Activated CD4-positive, alpha-beta T cell treated with anti-CD3 and anti-CD28 coated beads, Interleukin-2, amount 10 ng/mL, durations not matched to agents 24 days and 14 days (primary cell): ENCODE measurements at regions of chr5 and their contacts with region 1.

Region 1: DNA sequence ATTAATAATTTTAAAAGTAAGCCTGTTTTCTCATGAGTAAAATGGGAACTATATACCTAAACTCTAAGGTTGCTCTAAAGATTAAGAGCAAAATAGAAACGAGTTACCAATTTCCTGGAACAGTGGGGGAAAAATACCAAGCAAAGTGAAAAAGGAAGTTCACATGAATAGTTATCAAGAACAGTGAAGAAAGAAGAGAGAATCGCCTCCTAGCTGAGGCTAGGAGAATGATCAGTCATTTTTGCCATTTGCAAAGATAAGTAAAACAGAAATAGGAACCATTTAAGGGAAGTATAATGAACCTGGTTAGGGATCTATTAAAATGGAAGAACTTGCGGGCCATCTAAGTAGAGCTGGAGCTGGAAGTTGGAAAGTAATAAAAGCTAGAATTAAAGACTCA is 50.7 kb downstream of the P4HA2 start:
- DNase-seq: no peak
- H3K4me3 Mint-ChIP-seq: peak overlapping the region; percentile 71
- H3K27ac Mint-ChIP-seq: peak overlapping the region; percentile 80
- H3K4me1 Mint-ChIP-seq: peaks cover 33% of the 10 kb centered on the region
- H3K27me3 Mint-ChIP-seq: peaks cover 8% of the 10 kb centered on the region

Region 2: DNA sequence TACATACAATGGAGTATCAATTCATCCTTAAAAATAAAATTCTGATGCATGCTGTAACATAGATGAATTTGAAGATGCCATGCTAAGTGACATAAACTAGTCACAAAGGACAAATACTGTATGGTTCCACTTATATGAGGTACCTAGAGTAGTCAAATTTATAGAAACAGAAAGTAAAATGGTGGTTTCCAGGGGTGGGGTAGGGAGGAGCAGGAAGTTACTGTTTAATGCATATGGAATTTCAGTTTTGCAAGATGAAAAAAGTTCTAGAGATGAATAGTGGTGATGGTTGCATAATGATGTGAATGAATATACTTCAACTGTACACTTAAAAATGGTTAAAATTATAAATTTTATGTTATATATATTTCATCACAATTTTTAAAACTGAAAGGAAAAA is 322.9 kb before region 1 on chr5:
- intact Hi-C with region 1: no loop called
- DNase-seq: peak; percentile 74
- H3K4me3 Mint-ChIP-seq: peak overlapping the region; percentile 43
- H3K27ac Mint-ChIP-seq: peak overlapping the region; percentile 46
- H3K4me1 Mint-ChIP-seq: peaks cover 19% of the 10 kb centered on the region
- H3K27me3 Mint-ChIP-seq: peaks cover 12% of the 10 kb centered on the region

Region 3: DNA sequence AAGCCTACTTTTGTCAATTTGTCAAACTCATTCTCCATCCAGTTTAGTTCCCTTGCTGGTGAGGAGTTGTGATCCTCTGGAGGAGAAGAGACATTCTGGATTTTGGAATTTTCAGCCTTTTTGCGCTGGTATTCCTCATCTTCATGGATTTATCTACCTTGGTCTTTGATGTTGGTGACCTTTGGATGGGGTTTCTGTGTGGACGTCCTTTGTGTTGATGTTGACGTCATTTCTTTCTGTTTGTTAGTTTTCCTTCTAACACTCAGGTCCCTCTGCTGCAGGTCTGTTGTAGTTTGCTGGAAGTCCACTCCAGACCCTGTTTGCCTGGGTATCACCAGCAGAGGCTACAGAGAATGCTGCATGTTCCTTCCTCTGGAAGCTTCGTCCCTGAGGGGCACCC is 20.6 kb before region 1 on chr5:
- intact Hi-C with region 1: no loop called
- DNase-seq: no peak
- H3K4me3 Mint-ChIP-seq: no peak overlapping the region
- H3K27ac Mint-ChIP-seq: no peak overlapping the region
- H3K4me1 Mint-ChIP-seq: peaks cover 2% of the 10 kb centered on the region
- H3K27me3 Mint-ChIP-seq: peaks cover 26% of the 10 kb centered on the region

Region 4: DNA sequence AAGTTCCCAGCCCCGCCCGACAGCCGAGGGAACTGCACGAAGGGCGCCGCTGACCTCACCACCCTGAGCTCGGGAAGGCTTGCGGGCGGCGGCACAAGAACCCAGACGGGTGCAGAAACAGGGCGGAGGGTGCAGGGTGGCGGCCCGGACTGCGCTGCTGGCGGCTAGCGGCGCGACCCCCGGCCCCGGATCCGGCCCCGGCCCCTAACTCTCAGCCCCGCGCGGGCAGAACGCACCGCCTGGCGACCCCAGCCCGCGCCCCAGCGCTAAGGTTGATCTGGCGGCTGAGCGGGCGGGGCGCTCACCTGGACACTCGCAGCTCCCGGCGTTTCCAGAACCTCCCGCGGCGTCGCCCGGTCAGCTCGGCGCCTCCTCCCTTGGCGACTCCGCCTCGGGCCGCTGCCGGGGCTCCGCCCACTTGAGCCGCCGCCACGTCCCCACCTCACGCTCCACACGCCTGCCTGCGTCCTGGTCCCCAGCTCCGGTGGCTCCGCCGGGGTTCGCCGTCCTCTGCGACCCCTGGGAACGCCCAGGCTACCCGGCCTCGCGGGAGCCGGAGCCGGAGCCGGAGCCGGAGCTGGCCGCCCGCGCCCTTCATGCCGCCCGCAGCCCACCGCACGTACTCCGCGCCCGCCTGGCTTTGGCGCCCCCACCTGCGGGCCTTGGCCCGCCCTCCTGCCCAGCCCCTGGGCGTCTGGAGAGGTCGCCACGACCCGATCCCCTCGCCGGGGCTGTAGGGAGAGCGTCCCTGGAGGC is 50.7 kb after region 1 on chr5 and contains the start of gene P4HA2:
- intact Hi-C with region 1: no loop called
- DNase-seq: peak; percentile 88
- H3K4me3 Mint-ChIP-seq: peak within 1 kb of the TSS; percentile 79
- H3K27ac Mint-ChIP-seq: peak within 1 kb of the TSS; percentile 18
- H3K4me1 Mint-ChIP-seq: peaks cover 46% of the 10 kb centered on the region
- H3K27me3 Mint-ChIP-seq: peaks cover 15% of the 10 kb centered on the region
- total RNA-seq, gene P4HA2: 45.5 and 49.5 TPM in 2 replicates

Region 5: GRCh38 chr5:132238169-132238744 is 61.3 kb after region 1 on chr5:
- intact Hi-C with region 1: loop called (anchors 2 kb)
- DNase-seq: peak; percentile 93
- H3K4me3 Mint-ChIP-seq: no peak overlapping the region
- H3K27ac Mint-ChIP-seq: no peak overlapping the region
- H3K4me1 Mint-ChIP-seq: peaks cover 6% of the 10 kb centered on the region
- H3K27me3 Mint-ChIP-seq: peaks cover 7% of the 10 kb centered on the region